ENCODE measurements at regions of chr9 and their contacts with region 1.

Region 1: DNA sequence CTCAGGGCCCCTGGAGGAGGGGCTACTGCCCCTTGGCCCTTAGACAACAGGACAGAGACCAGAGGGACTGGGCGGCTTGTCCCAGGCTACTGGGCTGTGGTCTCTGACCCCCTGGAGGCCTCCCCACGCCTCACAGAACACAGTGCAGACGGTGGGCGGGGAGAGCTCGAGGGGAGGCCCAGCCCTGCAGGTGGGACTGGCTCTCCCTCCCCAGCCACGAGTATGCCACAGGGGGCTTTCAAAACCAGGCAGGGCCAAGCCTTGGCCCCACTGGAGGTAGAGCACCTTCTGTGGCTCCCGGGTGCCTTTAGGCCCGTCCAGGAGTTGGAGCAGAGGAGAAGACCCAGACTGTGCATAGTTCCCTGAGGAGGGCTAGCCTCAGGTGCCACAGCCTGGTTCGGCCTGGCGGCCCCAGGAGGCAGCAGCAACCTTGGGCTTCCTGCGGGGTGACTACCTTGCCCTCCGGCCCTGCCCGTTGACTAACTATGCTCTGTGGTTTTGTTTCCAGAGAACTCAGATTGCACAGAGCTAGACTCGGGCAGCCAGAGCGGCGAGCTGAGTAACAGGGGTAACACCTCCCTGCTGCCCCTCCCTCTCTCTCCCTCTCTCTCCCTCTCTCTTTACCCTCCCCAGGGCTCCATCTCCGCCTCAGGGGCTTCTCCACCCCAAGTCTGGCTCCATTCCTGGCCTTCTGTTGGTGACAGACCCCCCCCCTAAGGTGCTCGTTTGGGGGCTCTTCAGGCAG is 15.5 kb downstream of the CARD19 start:
- H3K4me3 ChIP-seq: no peak overlapping the region
- H3K27ac ChIP-seq: no peak overlapping the region
- H3K4me1 ChIP-seq: no peaks in the 10 kb centered on the region
- CTCF ChIP-seq: no peak

Region 2: GRCh38 chr9:93095205-93096130 is 16.1 kb before region 1 on chr9:
- CTCF ChIA-PET with region 1: interaction called, 15 read pairs
- POLR2A ChIA-PET with region 1: interaction called, 4 read pairs
- H3K4me3 ChIP-seq: peak overlapping the region; percentile 44
- H3K27ac ChIP-seq: peak overlapping the region; percentile 63
- H3K4me1 ChIP-seq: peaks cover 2% of the 10 kb centered on the region; the same call in 1 of the 2 replicates
- CTCF ChIP-seq: no peak

Region 3: DNA sequence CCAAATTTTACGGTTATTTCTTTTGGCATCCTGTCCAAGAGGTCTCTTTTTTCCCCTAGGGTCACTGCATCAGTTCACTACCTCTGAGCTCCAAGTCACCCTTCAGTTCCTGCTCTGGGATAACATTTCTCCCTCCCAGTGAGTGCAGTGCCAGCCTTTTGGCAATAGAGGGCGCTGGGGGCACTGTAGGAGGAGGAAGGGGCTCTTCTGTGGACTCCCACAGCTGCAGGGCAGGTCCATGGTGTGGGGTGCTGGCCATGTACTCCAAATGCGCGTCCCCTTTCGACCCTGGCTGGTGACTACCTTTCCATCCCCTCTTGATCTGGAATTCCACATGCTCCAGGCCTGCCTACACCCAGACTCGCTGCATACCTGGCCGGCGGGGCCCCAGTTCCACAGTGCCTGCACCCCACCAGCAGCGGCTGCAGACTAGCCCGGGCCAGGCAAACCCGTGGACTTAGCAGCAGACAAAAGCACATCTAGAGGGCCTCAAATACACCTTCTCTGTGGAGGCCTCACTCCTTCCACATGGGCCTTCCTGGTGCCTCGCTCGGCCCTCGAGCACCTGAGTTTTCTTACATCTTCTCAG is 42.9 kb after region 1 on chr9:
- CTCF ChIA-PET with region 1: interaction called, 16 read pairs
- POLR2A ChIA-PET with region 1: no interaction called
- H3K4me3 ChIP-seq: no peak overlapping the region
- H3K27ac ChIP-seq: no peak overlapping the region
- H3K4me1 ChIP-seq: no peaks in the 10 kb centered on the region
- CTCF ChIP-seq: peak; percentile 36; the same call in 1 of the 2 replicates

Measured in HEK293 (cell line).